Common myeloid progenitor, CD34-positive (primary cell): ENCODE measurements at regions of chr5 and their contacts with region 1.

Region 1: GRCh38 chr5:148991606-148992005 is 71.3 kb downstream of the SH3TC2 start:
- DNase-seq: no peak
- H3K4me3 ChIP-seq: no peak overlapping the region
- H3K27ac ChIP-seq: no peak overlapping the region
- H3K4me1 ChIP-seq: no peaks in the 10 kb centered on the region
- H3K27me3 ChIP-seq: no peaks in the 10 kb centered on the region

Region 2: GRCh38 chr5:148979104-148979723 is 12.4 kb before region 1 on chr5:
- CTCF ChIA-PET with region 1: interaction called, 11 read pairs
- POLR2A ChIA-PET with region 1: no interaction called
- DNase-seq: no peak
- H3K4me3 ChIP-seq: no peak overlapping the region
- H3K27ac ChIP-seq: no peak overlapping the region
- H3K4me1 ChIP-seq: peaks cover 0 to 6% (median under 1%) of the 10 kb centered on the region in 4 experiments
- H3K27me3 ChIP-seq: no peaks in the 10 kb centered on the region